MCF 10A (cell line): ENCODE measurements at regions of chr10 and their contacts with region 1.

Region 1: GRCh38 chr10:71868192-71868697 is 17.2 kb upstream of the PSAP start:
- DNase-seq: peak; percentile 91
- H3K4me3 Mint-ChIP-seq: peak overlapping the region; percentile 44
- H3K27ac Mint-ChIP-seq: peak overlapping the region; percentile 92
- H3K4me1 Mint-ChIP-seq: peaks cover 24% of the 10 kb centered on the region
- H3K27me3 Mint-ChIP-seq: no peaks in the 10 kb centered on the region
- CTCF ChIP-seq: no peak

Region 2: DNA sequence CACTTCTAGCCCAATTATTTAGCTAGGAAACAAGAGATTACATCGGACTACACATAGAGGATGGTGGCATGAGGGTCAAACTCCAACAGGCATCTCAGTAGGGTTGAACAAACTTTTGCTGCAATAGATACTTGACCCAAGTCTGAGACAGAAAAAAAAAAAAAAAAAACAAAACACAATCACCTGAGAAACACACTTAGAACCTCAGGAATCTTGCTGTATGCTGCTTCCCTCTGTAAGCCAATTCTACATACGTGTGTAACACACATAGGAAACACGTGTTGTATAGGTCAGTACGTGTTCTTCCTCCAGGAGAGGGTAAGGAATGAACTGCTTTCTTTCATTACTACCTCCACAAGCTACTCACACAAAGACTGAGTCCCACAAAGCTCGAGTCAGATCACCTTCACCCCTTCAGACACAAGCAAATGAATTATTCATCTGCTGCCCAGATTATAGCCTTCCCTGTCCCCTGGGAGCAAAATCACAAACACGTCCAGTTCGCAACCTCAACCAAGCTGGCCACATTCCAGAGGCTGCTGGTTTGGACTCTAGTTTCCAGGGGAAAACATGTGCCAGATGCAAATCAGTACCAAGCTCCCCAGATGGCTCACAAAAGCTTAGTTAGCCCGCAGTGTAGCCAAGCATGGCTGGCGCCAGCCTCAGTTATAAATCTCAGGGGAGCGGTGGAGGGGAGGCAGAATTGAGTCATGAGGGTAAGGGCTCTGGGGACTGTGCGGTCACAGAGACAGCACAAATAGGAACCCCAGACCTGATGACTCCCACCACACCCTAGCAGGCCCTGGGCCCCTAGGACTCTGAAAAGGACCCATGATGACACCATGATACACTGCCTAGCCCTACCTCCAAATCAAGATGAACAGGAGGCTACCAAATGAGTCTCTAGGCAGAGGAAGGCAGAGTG is 32.3 kb before region 1 on chr10:
- CTCF ChIA-PET with region 1: interaction called, 3 read pairs
- POLR2A ChIA-PET with region 1: interaction called, 13 read pairs
- intact Hi-C with region 1: no loop called
- DNase-seq: peak; percentile 69
- H3K4me3 Mint-ChIP-seq: no peak overlapping the region
- H3K27ac Mint-ChIP-seq: peak overlapping the region; percentile 84
- H3K4me1 Mint-ChIP-seq: peaks cover 58% of the 10 kb centered on the region
- H3K27me3 Mint-ChIP-seq: no peaks in the 10 kb centered on the region
- CTCF ChIP-seq: no peak

Region 3: GRCh38 chr10:71850637-71851464 is 17.4 kb before region 1 on chr10 and contains the start of gene PSAP:
- CTCF ChIA-PET with region 1: interaction called, 3 read pairs
- POLR2A ChIA-PET with region 1: interaction called, 34 read pairs
- intact Hi-C with region 1: no loop called
- DNase-seq: peak; percentile 99
- H3K4me3 Mint-ChIP-seq: peak within 1 kb of the TSS; percentile 80
- H3K27ac Mint-ChIP-seq: peak within 1 kb of the TSS; percentile 94
- H3K4me1 Mint-ChIP-seq: peaks cover 42% of the 10 kb centered on the region
- H3K27me3 Mint-ChIP-seq: no peaks in the 10 kb centered on the region
- CTCF ChIP-seq: no peak
- total RNA-seq, gene PSAP: 506 and 692 TPM in 2 replicates

Region 4: DNA sequence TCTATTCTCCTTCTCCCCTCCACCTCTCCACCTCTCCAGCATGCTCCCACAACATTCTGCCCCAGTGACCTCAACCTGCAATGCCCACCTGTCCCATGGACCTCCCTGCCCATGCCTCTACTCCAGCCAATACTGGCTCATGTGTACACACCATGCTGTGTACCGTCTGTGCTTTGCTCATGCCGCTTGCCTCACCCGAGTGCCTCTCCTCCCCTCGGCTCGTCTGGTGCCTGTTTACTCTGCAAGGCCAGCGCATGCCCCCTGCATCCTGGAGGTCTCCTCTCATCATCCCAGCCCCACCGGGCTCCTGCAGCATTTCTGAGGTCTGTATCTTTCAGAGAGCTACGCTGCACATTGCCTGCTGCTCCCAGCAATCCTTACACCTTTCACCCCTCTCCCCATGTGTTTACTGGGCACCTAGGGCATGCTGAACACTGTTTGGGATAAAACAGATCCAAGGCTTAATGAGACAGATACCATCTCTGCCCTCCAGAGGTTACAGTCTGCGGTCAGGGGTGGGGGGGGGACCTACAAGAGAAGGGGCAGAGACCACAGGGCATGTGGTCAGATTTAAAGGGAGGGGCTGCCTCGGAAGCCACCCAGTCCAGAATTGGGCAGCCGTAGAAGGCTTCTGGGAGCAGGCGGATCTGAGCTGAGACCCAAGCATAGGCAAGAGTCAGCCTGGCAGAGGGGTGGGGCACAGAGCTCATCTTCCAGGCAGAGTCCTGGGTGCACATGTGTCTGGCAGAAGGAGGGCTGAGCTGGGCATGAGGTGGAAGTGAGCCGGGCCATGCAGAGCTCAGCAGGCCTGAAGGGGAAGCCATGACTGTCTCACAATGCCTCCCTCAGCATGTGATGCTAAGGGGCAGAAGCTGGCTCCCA is 12.4 kb after region 1 on chr10:
- CTCF ChIA-PET with region 1: interaction called, 5 read pairs
- POLR2A ChIA-PET with region 1: interaction called, 10 read pairs
- intact Hi-C with region 1: no loop called
- DNase-seq: no peak
- H3K4me3 Mint-ChIP-seq: no peak overlapping the region
- H3K27ac Mint-ChIP-seq: no peak overlapping the region
- H3K4me1 Mint-ChIP-seq: no peaks in the 10 kb centered on the region
- H3K27me3 Mint-ChIP-seq: no peaks in the 10 kb centered on the region
- CTCF ChIP-seq: no peak